ENCODE measurements at regions of chr4 and their contacts with region 1.

Region 1: GRCh38 chr4:38529189-38530115 is 134.5 kb upstream of the KLF3 start:
- DNase-seq: peak in 13 of 14 experiments; percentile 12 to 80 (median 39)
- ATAC-seq: peak; percentile 88
- H3K4me3 ChIP-seq: no peak overlapping the region
- H3K4me3 Mint-ChIP-seq: peak overlapping the region; percentile 72
- H3K27ac ChIP-seq: peak overlapping the region in 1 of 2 donors; percentile 75
- H3K27ac Mint-ChIP-seq: peak overlapping the region; percentile 78
- H3K4me1 ChIP-seq: peaks cover 32% of the 10 kb centered on the region
- H3K4me1 Mint-ChIP-seq: peaks cover 51% of the 10 kb centered on the region
- H3K27me3 ChIP-seq: no peaks in the 10 kb centered on the region
- H3K27me3 Mint-ChIP-seq: no peaks in the 10 kb centered on the region
- CTCF ChIP-seq: no peak

Region 2: DNA sequence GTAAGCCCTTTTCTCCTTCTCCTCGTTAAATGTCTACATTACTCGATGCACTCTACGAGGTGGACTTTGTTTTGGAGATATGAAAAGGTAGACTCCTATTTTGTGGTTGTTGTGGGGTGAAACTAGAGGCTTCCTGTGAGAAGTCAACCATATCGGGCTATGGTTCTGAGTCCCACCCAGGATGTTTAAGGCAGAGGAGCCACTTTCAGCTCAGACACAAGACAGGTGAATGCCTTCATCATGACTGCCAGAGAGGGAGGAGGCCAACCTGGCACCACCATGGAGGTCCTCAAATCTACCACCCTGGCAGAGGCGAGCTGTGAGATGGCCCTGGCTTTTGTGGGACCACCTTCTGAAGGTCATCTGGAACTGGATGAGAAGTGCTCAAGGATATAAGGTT is 19.9 kb before region 1 on chr4:
- CTCF ChIA-PET with region 1: interaction called, 3 read pairs
- POLR2A ChIA-PET with region 1: interaction called, 20 read pairs
- intact Hi-C with region 1: no loop called
- DNase-seq: peak in 12 of 14 experiments; percentile 30 to 87 (median 46)
- ATAC-seq: peak; percentile 93
- H3K4me3 ChIP-seq: peak overlapping the region; percentile 65
- H3K4me3 Mint-ChIP-seq: peak overlapping the region; percentile 82
- H3K27ac ChIP-seq: peak overlapping the region; percentile 60 to 78
- H3K27ac Mint-ChIP-seq: peak overlapping the region; percentile 86
- H3K4me1 ChIP-seq: peaks cover 63% of the 10 kb centered on the region
- H3K4me1 Mint-ChIP-seq: peaks cover 84% of the 10 kb centered on the region
- H3K27me3 ChIP-seq: no peaks in the 10 kb centered on the region
- H3K27me3 Mint-ChIP-seq: no peaks in the 10 kb centered on the region
- CTCF ChIP-seq: no peak

Region 3: GRCh38 chr4:38562751-38563198 is 33.3 kb after region 1 on chr4:
- CTCF ChIA-PET with region 1: no interaction called
- POLR2A ChIA-PET with region 1: no interaction called
- intact Hi-C with region 1: loop called in 1 of 2 experiments (anchors 1 kb)
- DNase-seq: peak in 2 of 14 experiments; percentile 11 to 16
- ATAC-seq: no peak
- H3K4me3 ChIP-seq: no peak overlapping the region
- H3K4me3 Mint-ChIP-seq: no peak overlapping the region
- H3K27ac ChIP-seq: no peak overlapping the region
- H3K27ac Mint-ChIP-seq: no peak overlapping the region
- H3K4me1 ChIP-seq: peaks cover 7% of the 10 kb centered on the region
- H3K4me1 Mint-ChIP-seq: peaks cover 27% of the 10 kb centered on the region
- H3K27me3 ChIP-seq: no peaks in the 10 kb centered on the region
- H3K27me3 Mint-ChIP-seq: no peaks in the 10 kb centered on the region
- CTCF ChIP-seq: no peak

Region 4: DNA sequence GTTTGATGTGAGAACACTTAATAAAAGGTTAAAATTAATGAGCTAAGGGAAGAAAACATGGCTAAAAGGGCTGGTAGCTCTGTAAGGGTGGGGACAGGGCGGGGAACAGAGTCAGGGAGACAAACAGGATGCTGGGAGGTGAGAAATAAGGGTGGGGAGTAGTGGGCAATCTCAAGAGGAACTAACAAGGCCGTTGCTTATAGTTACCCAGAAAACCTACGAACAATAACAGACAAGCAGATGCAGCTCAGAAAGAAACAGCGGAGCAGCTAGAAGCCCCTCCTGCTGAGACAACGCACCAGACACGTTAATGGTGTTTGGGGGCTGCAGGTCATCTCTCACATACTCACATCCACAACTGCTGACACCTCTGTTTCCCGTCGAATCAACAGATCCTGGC is 124.8 kb after region 1 on chr4:
- CTCF ChIA-PET with region 1: no interaction called
- POLR2A ChIA-PET with region 1: interaction called, 10 read pairs
- intact Hi-C with region 1: no loop called
- DNase-seq: peak in 11 of 14 experiments; percentile 32 to 91 (median 48)
- ATAC-seq: peak; percentile 68
- H3K4me3 ChIP-seq: peak overlapping the region; percentile 36
- H3K4me3 Mint-ChIP-seq: peak overlapping the region; percentile 85
- H3K27ac ChIP-seq: peak overlapping the region; percentile 80 to 92
- H3K27ac Mint-ChIP-seq: peak overlapping the region; percentile 98
- H3K4me1 ChIP-seq: peaks cover 35% of the 10 kb centered on the region
- H3K4me1 Mint-ChIP-seq: peaks cover 55% of the 10 kb centered on the region
- H3K27me3 ChIP-seq: no peaks in the 10 kb centered on the region
- H3K27me3 Mint-ChIP-seq: no peaks in the 10 kb centered on the region
- CTCF ChIP-seq: no peak

Measured in CD4-positive, alpha-beta T cell (primary cell).